SK-N-SH (cell line): ENCODE measurements at regions of chr17 and their contacts with region 1.

Region 1: DNA sequence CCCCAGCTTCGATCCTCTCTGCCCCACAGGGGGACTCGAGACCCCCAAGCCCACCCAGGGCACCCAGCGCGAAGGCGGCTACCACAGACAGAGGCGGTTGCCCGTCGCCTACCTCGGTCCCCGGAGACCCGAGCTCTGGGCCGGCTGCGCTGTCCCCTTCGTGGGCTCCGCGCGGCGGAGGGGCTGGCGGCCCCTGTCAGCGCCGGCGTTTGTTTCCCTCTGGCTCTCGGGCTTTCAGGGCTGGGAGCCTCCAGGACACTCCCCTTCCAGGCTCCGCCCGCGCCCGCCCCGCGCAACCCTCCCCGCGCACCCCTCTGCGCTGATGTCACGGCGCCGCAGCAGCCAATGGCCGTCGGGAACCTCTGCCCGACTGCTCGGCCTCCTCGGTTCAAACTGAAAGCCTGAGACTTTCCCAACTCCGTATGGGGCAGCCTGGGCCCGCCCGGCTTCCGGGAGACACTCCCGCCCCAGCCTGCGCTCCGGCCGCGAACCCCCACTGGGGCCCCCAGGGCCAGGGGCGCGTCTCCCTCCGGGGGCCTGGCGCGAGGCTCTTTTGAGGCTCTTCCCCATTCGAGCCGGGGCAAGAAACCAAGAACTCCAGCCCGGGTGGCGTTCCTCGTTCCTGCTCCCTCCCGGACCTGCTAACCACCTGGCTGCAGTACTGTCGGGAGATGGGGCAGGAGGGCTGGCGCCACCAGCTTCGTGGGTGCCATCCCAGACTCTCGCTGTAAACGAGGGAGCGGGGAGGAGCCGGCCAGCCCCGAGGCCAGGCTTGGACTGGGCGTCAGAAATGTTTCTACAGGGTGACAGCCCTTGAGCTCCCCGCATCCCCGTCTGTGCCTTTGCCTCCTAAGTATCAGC is at the start of gene CDC42EP4:
- DNase-seq: peak; percentile 98
- H3K4me3 ChIP-seq: peak within 1 kb of the TSS; percentile 86 to 99
- H3K27ac ChIP-seq: peak within 1 kb of the TSS; percentile 93 to 96
- H3K4me1 ChIP-seq: peaks cover 30 to 35% of the 10 kb centered on the region in 2 experiments; a peak in 3 of 4 replicates
- H3K27me3 ChIP-seq: no peaks in the 10 kb centered on the region
- CTCF ChIP-seq: no peak; the same call in 1 of the 2 replicates
- EP300 ChIP-seq: 0 out of 4 replicates have a peak, but pooled peaks of 1 of the 2 experiments have one; percentile 21
- RAD21 ChIP-seq: no peak; the same call in 1 of the 2 replicates
- polyA plus RNA-seq, gene CDC42EP4: 23.7 and 28.3 TPM in 2 replicates

Region 2: DNA sequence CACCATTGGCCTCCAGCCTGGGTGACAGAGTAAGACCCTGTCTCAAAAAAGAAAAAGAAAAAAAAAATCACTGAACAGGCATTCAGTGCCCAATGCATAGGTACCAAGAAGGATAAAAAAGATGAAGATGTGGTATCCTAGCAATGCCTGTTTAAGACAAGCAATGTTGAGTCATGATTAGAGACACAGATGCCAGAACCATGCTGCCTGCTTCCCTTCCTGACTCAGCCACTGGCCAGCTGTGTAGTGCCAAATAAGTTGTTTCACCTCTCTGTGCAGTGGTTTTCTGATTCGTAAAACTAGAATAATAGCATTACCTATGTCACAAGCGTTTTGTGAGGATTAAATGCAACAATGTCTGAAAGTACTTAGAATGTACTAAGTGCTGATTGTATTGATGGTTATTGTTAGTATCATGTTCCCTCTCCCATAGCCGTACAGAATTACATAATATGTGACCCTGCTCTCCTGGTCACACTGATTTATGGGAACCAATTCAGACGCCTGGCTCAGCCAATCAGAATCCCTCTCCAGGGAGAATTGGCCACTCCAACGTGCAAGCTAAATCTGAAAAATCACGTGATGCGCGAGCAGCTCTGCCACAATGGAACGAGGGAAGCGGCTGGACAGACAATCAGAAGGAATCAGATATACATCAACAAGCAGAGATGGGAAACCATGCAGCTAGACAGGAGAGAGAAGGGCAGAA is 461.4 kb before region 1 on chr17:
- CTCF ChIA-PET with region 1: no interaction called
- POLR2A ChIA-PET with region 1: no interaction called
- DNase-seq: no peak
- H3K4me3 ChIP-seq: no peak overlapping the region
- H3K27ac ChIP-seq: no peak overlapping the region
- H3K4me1 ChIP-seq: no peaks in the 10 kb centered on the region
- H3K27me3 ChIP-seq: no peaks in the 10 kb centered on the region
- CTCF ChIP-seq: no peak
- EP300 ChIP-seq: no peak
- RAD21 ChIP-seq: no peak

Region 3: GRCh38 chr17:73261952-73262675 is 49.9 kb before region 1 on chr17:
- CTCF ChIA-PET with region 1: interaction called, 14 read pairs
- POLR2A ChIA-PET with region 1: interaction called, 3 read pairs
- DNase-seq: peak; percentile 36
- H3K4me3 ChIP-seq: no peak overlapping the region
- H3K27ac ChIP-seq: no peak overlapping the region
- H3K4me1 ChIP-seq: peaks cover 0 to 11% of the 10 kb centered on the region in 2 experiments; a peak in 1 of 4 replicates
- H3K27me3 ChIP-seq: no peaks in the 10 kb centered on the region
- CTCF ChIP-seq: no peak
- EP300 ChIP-seq: no peak
- RAD21 ChIP-seq: no peak

Region 4: DNA sequence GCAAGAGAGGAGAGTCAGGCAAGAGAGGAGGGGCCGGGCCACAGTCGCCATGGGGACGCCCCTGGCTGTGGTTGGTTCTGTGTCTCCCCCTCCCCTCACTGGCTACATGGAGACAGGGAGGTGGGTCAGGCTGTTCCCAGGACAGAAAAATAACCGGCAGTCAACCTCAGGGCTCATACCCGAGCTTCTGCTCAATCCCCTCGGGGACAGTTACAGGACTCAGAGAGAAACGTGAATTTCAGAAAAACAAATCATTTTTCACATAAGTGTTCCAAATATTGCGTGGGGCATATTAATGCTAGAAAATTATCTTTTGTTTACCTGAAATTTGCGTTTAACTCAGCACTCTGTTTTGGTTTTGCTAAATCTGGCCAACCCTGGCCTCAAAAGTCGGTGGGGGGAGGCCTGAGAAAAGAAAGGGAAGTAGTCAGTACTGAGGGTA is 28.1 kb before region 1 on chr17:
- CTCF ChIA-PET with region 1: interaction called, 16 read pairs
- POLR2A ChIA-PET with region 1: interaction called, 3 read pairs
- DNase-seq: peak; percentile 92
- H3K4me3 ChIP-seq: no peak overlapping the region
- H3K27ac ChIP-seq: peak overlapping the region in 1 of 2 experiments; percentile 74; a peak in 2 of 4 replicates
- H3K4me1 ChIP-seq: peaks cover 0 to 54% of the 10 kb centered on the region in 2 experiments; a peak in 3 of 4 replicates
- H3K27me3 ChIP-seq: no peaks in the 10 kb centered on the region
- CTCF ChIP-seq: no peak
- EP300 ChIP-seq: no peak
- RAD21 ChIP-seq: no peak

Region 5: DNA sequence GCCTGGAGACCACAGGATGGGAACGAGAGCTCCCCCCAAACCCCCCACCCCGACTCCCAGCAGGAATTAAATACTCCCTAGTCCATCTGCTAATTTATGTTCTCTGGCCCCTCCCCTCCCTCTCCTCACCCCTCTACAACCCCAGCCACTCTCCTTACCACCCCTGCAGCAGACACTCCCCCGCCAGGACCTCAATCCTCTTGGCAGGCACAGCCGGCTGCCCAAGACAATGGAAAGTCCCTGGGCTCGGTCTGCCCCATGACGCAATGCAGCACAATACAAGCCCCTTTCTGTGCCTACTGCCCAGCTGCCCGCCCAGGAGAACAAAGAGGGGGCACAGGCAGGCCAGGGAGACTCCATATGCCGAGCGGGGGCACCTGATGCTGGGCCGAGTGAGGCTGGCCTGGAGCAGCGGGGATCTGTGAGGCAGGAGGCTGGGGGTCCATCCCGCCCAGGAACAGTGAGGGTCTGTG is 30.1 kb after region 1 on chr17:
- CTCF ChIA-PET with region 1: interaction called, 47 read pairs
- POLR2A ChIA-PET with region 1: interaction called, 26 read pairs
- DNase-seq: peak; percentile 69
- H3K4me3 ChIP-seq: no peak overlapping the region
- H3K27ac ChIP-seq: peak overlapping the region; percentile 70 to 92
- H3K4me1 ChIP-seq: peaks cover 23 to 42% of the 10 kb centered on the region in 2 experiments
- H3K27me3 ChIP-seq: no peaks in the 10 kb centered on the region
- CTCF ChIP-seq: no peak
- EP300 ChIP-seq: peak in 1 of 2 experiments; percentile 9; a peak in 1 of 4 replicates
- RAD21 ChIP-seq: no peak

Region 6: GRCh38 chr17:73359987-73360410 is 48.0 kb after region 1 on chr17:
- CTCF ChIA-PET with region 1: interaction called, 154 read pairs
- POLR2A ChIA-PET with region 1: interaction called, 16 read pairs
- DNase-seq: peak; percentile 63
- H3K4me3 ChIP-seq: no peak overlapping the region
- H3K27ac ChIP-seq: no peak overlapping the region
- H3K4me1 ChIP-seq: peaks cover 0 to 59% of the 10 kb centered on the region in 2 experiments; a peak in 1 of 4 replicates
- H3K27me3 ChIP-seq: 0 out of 2 replicates have a peak, but pooled peaks cover 7% of the 10 kb centered on the region
- CTCF ChIP-seq: no peak
- EP300 ChIP-seq: no peak
- RAD21 ChIP-seq: no peak

Region 7: GRCh38 chr17:73436954-73437353 is 124.9 kb after region 1 on chr17:
- CTCF ChIA-PET with region 1: no interaction called
- POLR2A ChIA-PET with region 1: no interaction called
- DNase-seq: no peak
- H3K4me3 ChIP-seq: no peak overlapping the region
- H3K27ac ChIP-seq: no peak overlapping the region
- H3K4me1 ChIP-seq: no peaks in the 10 kb centered on the region
- H3K27me3 ChIP-seq: no peaks in the 10 kb centered on the region
- CTCF ChIP-seq: no peak
- EP300 ChIP-seq: no peak
- RAD21 ChIP-seq: no peak